Endothelial cell of umbilical vein (primary cell): ENCODE measurements at regions of chr21 and their contacts with region 1.

Region 1: GRCh38 chr21:35375115-35375514 is 326.0 kb upstream of the RUNX1 start:
- DNase-seq: peak; percentile 66
- H3K4me3 ChIP-seq: no peak overlapping the region
- H3K27ac ChIP-seq: peak overlapping the region; percentile 66
- H3K4me1 ChIP-seq: peaks cover 50% of the 10 kb centered on the region
- H3K27me3 ChIP-seq: no peaks in the 10 kb centered on the region
- CTCF ChIP-seq: no peak
- POLR2A ChIP-seq: peak; percentile 41

Region 2: GRCh38 chr21:34693192-34693810 is 681.8 kb before region 1 on chr21:
- CTCF ChIA-PET with region 1: no interaction called
- POLR2A ChIA-PET with region 1: no interaction called
- dilution Hi-C with region 1: no loop called
- intact Hi-C with region 1: no loop called
- DNase-seq: peak; percentile 57
- H3K4me3 ChIP-seq: no peak overlapping the region
- H3K27ac ChIP-seq: no peak overlapping the region
- H3K4me1 ChIP-seq: no peaks in the 10 kb centered on the region
- H3K27me3 ChIP-seq: peaks cover 14 to 30% of the 10 kb centered on the region in 2 experiments
- CTCF ChIP-seq: peak; percentile 79 to 81
- POLR2A ChIP-seq: no peak

Region 3: GRCh38 chr21:34807146-34807880 is 567.8 kb before region 1 on chr21:
- CTCF ChIA-PET with region 1: no interaction called
- POLR2A ChIA-PET with region 1: no interaction called
- dilution Hi-C with region 1: no loop called
- intact Hi-C with region 1: loop called (anchors 5 kb)
- DNase-seq: peak; percentile 94
- H3K4me3 ChIP-seq: no peak overlapping the region
- H3K27ac ChIP-seq: peak overlapping the region; percentile 100
- H3K4me1 ChIP-seq: peaks cover 37% of the 10 kb centered on the region
- H3K27me3 ChIP-seq: no peaks in the 10 kb centered on the region
- CTCF ChIP-seq: no peak
- POLR2A ChIP-seq: no peak

Region 4: DNA sequence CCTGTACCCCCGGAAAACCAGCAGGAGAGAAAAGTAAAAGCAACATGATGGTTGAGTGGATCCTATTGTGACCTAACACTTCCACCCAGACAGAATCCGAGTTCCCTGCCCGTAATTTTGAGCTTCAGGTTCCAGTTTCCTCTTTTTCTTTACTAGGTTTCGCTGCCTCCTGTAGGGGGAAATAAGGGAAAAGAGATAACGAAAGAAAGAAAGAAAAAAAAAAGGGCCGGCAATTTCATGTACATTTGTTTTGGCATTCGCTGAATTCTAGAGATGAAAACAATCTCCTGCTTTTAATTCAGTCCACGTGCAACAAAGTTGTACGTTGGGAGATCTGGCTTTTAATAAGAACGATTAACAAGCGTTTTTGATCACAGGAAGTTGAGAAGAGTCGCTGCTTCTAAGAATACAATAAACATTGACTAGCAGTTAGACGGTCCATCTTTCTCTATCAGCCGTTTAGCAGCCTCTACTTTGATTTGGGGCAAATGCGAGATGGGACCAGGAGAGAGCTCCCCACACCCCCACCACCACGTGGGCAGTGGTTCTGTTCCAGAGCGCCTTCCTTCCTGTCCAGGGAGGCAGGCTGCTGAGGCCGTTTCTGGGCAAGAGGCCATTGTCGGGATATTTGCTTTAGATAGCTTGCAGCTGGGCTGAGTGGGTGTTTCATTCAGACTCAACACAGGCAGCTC is 170.1 kb before region 1 on chr21:
- CTCF ChIA-PET with region 1: interaction called, 5 read pairs
- POLR2A ChIA-PET with region 1: no interaction called
- dilution Hi-C with region 1: no loop called
- intact Hi-C with region 1: loop called (anchors 10 kb)
- DNase-seq: peak; percentile 96
- H3K4me3 ChIP-seq: peak overlapping the region in 1 of 3 experiments; percentile 24
- H3K27ac ChIP-seq: peak overlapping the region; percentile 53
- H3K4me1 ChIP-seq: peaks cover 35% of the 10 kb centered on the region
- H3K27me3 ChIP-seq: no peaks in the 10 kb centered on the region
- CTCF ChIP-seq: no peak
- POLR2A ChIP-seq: peak; percentile 42

Region 5: GRCh38 chr21:35232545-35233176 is 142.5 kb before region 1 on chr21:
- CTCF ChIA-PET with region 1: no interaction called
- POLR2A ChIA-PET with region 1: no interaction called
- dilution Hi-C with region 1: no loop called
- intact Hi-C with region 1: loop called (anchors 1 kb)
- DNase-seq: peak; percentile 93
- H3K4me3 ChIP-seq: no peak overlapping the region
- H3K27ac ChIP-seq: peak overlapping the region; percentile 70
- H3K4me1 ChIP-seq: peaks cover 19% of the 10 kb centered on the region
- H3K27me3 ChIP-seq: no peaks in the 10 kb centered on the region
- CTCF ChIP-seq: no peak
- POLR2A ChIP-seq: no peak

Region 6: DNA sequence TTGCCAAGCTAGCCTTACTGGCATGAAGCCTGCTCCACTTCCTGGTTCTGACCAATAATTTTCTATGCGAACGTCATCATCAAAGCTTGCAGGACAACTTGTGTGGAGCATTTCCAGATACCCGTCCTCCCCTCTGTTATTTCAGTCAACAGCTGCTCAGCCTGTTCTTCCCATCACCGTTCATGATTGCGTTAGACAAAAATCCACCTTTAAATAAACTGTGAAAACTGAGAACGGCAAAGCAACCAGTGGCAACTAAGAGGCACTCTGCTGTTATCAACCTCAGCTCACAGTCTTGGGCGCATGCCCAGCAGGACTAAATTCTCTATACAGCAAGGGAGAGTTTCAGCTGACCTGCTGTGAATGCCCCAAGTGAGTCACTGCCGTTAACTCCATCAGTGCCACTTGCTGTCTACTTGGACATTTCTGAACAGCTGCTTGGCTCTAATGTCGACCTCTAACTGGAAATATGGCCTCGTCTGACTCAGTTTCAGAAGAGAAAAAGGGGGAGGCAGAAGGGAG is 118.6 kb before region 1 on chr21:
- CTCF ChIA-PET with region 1: interaction called, 6 read pairs
- POLR2A ChIA-PET with region 1: interaction called, 3 read pairs
- dilution Hi-C with region 1: no loop called
- intact Hi-C with region 1: loop called (anchors 1 kb)
- DNase-seq: peak; percentile 98
- H3K4me3 ChIP-seq: peak overlapping the region in 2 of 3 experiments; percentile 20 to 47
- H3K27ac ChIP-seq: peak overlapping the region; percentile 78
- H3K4me1 ChIP-seq: peaks cover 15% of the 10 kb centered on the region
- H3K27me3 ChIP-seq: no peaks in the 10 kb centered on the region
- CTCF ChIP-seq: no peak
- POLR2A ChIP-seq: no peak

Region 7: GRCh38 chr21:35390013-35390776 is 15.1 kb after region 1 on chr21:
- CTCF ChIA-PET with region 1: interaction called, 16 read pairs
- POLR2A ChIA-PET with region 1: interaction called, 3 read pairs
- dilution Hi-C with region 1: no loop called
- intact Hi-C with region 1: no loop called
- DNase-seq: peak; percentile 60
- H3K4me3 ChIP-seq: no peak overlapping the region
- H3K27ac ChIP-seq: no peak overlapping the region
- H3K4me1 ChIP-seq: peaks cover 8% of the 10 kb centered on the region
- H3K27me3 ChIP-seq: no peaks in the 10 kb centered on the region
- CTCF ChIP-seq: no peak
- POLR2A ChIP-seq: no peak

Region 8: DNA sequence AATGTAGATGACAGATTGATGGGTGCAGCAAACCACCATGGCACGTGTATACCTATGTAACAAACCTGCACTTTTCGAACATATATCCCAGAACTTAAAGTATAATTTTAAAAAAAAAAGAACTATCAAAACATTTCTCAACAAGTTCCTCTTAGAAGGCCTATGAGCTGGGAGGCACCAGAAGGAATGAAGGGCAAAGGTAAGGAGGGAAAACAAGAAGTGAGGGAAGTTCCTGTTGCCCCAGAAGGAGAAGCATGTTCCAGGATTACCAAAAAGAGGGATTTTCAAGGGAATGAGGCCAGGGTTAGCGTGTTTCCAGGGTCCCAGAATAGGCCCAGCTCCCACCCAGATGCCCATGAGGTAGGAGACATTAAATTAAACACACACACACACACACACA is 324.2 kb after region 1 on chr21:
- CTCF ChIA-PET with region 1: no interaction called
- POLR2A ChIA-PET with region 1: no interaction called
- dilution Hi-C with region 1: no loop called
- intact Hi-C with region 1: no loop called
- DNase-seq: no peak
- H3K4me3 ChIP-seq: no peak overlapping the region
- H3K27ac ChIP-seq: no peak overlapping the region
- H3K4me1 ChIP-seq: no peaks in the 10 kb centered on the region
- H3K27me3 ChIP-seq: peaks cover 26 to 32% of the 10 kb centered on the region in 2 experiments
- CTCF ChIP-seq: no peak
- POLR2A ChIP-seq: no peak